Activated CD4-positive, alpha-beta memory T cell treated with anti-CD3 and anti-CD28 coated beads for 36 hours (primary cell): ENCODE measurements at regions of chr12 and their contacts with region 1.

Region 1: DNA sequence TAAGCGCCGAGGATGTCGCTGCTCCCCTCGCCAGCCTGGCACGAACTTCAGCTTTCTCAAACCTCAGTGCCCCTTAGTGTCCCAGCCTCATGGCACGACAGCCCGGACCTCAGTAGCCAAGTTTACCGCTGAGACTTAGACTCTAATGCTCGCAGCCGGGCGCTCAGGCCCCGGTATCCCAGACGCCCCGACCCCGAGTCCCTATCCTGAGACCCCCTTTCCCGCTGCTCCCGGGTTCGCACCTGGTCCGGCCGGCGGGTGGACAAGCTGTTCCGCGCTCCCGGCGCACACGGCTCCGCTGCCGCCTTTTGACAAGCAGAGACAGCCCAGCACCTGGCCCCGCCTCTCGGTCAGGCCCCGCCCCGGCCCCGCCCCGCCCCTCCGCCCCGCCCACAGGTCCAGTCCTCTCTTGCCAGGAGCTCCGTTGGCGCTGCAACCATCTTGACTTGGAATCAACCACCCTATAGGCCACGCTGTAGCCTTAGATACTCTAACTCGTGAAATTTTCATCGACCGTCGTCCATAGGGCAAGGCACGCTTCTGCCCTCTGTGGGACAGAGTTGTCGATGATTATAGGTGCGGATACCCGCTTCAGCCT is at the start of gene VDR:
- DNase-seq: peak; percentile 87
- H3K4me3 Mint-ChIP-seq: peak within 1 kb of the TSS; percentile 97
- H3K27ac Mint-ChIP-seq: peak within 1 kb of the TSS; percentile 93
- H3K4me1 Mint-ChIP-seq: peaks cover 43% of the 10 kb centered on the region
- H3K27me3 Mint-ChIP-seq: peaks cover 7% of the 10 kb centered on the region
- total RNA-seq, gene VDR: 156 TPM

Region 2: GRCh38 chr12:47863467-47863866 is 41.3 kb before region 1 on chr12:
- CTCF ChIA-PET with region 1: interaction called, 12 read pairs
- POLR2A ChIA-PET with region 1: interaction called, 20 read pairs
- intact Hi-C with region 1: loop called (anchors 2 kb)
- DNase-seq: no peak
- H3K4me3 Mint-ChIP-seq: no peak overlapping the region
- H3K27ac Mint-ChIP-seq: peak overlapping the region; percentile 54
- H3K4me1 Mint-ChIP-seq: peaks cover 86% of the 10 kb centered on the region
- H3K27me3 Mint-ChIP-seq: no peaks in the 10 kb centered on the region

Region 3: DNA sequence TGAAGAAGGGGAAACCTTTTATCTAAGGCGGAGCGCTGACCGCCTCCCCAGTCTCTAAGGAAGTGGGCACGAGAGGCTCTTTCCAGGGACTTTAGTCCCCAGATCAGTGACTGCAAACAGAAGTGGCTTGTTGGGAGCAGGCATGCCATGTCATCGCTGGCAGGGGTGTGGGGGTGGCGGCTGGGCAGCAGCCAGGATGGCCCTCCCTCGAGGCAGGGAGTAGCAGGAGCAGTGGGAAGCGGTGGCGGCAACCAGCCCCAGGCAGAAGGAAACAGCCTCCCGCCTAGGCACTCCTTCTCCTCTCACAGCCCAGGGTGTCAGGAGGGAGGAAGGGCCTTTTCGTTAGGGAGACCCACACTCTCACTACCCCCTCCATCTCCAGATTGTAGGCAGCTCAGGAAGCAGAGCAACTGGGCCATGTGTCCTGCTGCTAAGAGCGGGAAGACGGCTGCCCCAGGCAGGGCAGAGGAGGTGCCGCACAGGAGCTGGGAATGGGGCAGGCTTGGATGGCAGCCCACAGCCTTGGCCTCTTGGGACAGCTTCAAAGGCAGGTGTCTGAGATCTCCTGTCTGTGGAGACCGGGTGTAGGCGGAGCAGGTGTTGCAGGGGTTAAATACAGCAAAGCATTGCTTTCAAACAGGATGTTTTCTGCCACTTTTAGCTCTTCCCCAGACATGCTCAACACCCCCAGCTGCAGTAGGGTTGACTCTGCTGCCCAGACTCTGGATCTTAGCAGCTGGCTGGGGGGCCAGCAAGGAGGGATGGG is 21.8 kb before region 1 on chr12:
- CTCF ChIA-PET with region 1: interaction called, 34 read pairs
- POLR2A ChIA-PET with region 1: interaction called, 76 read pairs
- intact Hi-C with region 1: loop called (anchors 1 kb)
- DNase-seq: peak; percentile 67
- H3K4me3 Mint-ChIP-seq: peak overlapping the region; percentile 89
- H3K27ac Mint-ChIP-seq: peak overlapping the region; percentile 97
- H3K4me1 Mint-ChIP-seq: peaks cover 88% of the 10 kb centered on the region
- H3K27me3 Mint-ChIP-seq: no peaks in the 10 kb centered on the region

Region 4: DNA sequence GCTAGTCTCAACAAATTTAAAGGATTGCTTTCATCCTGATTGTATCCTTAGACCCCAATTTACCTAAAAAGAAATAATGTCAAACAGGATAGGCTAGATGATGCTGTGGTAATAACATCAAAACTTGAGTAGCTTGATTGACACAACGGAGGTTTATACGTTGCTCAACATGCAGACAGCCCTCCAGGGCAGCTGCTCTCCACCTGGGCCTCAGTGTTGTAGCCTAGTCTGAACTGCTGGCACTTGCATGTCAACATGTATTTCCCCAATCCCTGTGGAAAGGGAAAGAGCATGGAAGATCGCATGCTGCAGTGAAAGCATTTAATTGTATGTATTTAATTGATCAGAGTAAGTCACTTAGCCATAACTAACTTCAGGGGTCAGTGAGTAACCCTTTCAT is 11.7 kb after region 1 on chr12:
- CTCF ChIA-PET with region 1: interaction called, 10 read pairs
- POLR2A ChIA-PET with region 1: interaction called, 5 read pairs
- intact Hi-C with region 1: no loop called
- DNase-seq: no peak
- H3K4me3 Mint-ChIP-seq: no peak overlapping the region
- H3K27ac Mint-ChIP-seq: no peak overlapping the region
- H3K4me1 Mint-ChIP-seq: no peaks in the 10 kb centered on the region
- H3K27me3 Mint-ChIP-seq: peaks cover 9% of the 10 kb centered on the region

Region 5: GRCh38 chr12:47963340-47964040 is 58.7 kb after region 1 on chr12 and contains the start of gene TMEM106C:
- CTCF ChIA-PET with region 1: interaction called, 26 read pairs
- POLR2A ChIA-PET with region 1: interaction called, 3 read pairs
- intact Hi-C with region 1: loop called (anchors 1 kb)
- DNase-seq: peak; percentile 94
- H3K4me3 Mint-ChIP-seq: peak within 1 kb of the TSS; percentile 98
- H3K27ac Mint-ChIP-seq: peak within 1 kb of the TSS; percentile 81
- H3K4me1 Mint-ChIP-seq: peaks cover 34% of the 10 kb centered on the region
- H3K27me3 Mint-ChIP-seq: peaks cover 5% of the 10 kb centered on the region
- total RNA-seq, gene TMEM106C: 179 to 182 TPM

Region 6: DNA sequence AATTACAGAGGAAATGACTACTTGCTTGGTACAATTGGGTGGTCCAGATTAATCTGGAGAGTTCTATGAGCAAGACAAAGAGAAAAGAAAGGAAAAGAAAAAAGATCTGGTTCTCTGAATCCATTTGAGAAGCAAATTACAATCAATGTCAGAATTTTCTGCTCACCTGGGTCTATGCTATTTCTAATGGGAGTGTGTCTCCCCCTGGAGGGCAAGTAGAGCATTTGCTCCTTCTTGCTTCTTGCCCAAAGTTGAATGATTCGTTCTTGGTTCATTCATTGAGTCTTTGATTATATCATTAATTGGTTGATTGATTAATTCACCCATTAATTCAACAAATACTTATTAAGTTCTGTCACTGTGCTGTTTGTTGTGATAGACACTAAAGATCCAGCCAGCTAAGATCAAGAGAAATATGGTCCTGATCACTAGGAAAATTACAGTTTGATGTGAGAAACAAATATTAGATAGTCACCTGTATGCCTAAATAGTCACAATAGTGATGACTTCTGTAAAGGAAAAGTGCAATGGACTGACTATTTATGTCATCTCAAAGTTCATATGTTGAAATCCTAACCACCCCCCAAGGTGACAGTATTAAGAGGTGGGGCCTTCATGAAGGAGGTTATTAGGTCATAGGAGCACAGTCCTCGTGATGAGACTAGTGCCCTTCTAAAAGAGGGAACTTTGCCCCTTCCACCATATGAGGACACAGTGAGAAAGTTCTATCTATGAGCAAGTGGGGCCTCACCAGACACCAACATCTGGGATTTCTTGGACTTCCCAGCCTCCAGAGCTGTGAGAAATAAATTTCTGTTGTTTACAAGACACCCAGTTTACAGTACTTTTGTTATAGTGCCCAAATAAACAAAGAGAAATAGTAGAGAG is 260.5 kb after region 1 on chr12:
- CTCF ChIA-PET with region 1: interaction called, 4 read pairs
- POLR2A ChIA-PET with region 1: no interaction called
- intact Hi-C with region 1: loop called (anchors 2 kb)
- DNase-seq: peak; percentile 49
- H3K4me3 Mint-ChIP-seq: no peak overlapping the region
- H3K27ac Mint-ChIP-seq: peak overlapping the region; percentile 3
- H3K4me1 Mint-ChIP-seq: no peaks in the 10 kb centered on the region
- H3K27me3 Mint-ChIP-seq: peaks cover 4% of the 10 kb centered on the region